ENCODE measurements at regions of chr14 and their contacts with region 1.

Region 1: DNA sequence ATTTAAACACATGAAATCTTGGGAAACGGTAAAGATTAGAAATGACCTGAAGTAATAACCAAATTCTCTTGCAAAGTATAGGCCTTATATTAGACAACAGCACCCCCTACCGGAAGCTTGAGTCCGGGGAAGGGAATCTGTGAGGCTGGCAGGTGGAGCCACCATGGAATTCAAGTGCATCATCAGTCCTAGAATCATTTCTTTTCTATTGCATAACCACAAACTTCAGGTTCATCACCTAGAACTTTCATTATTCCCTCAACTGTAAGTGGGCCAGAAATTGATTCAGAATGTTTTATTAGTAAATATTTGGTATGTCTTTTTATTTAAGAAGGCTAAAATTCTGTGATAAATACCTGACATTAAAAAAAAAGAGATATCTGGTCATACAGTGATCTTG is 48.5 kb downstream of the AP5M1 start:
- DNase-seq: peak; percentile 92
- H3K4me3 Mint-ChIP-seq: no peak overlapping the region
- H3K27ac Mint-ChIP-seq: no peak overlapping the region
- H3K4me1 Mint-ChIP-seq: peaks cover 5% of the 10 kb centered on the region
- H3K27me3 Mint-ChIP-seq: peaks cover 2% of the 10 kb centered on the region

Region 2: GRCh38 chr14:56491299-56492285 is 825.7 kb before region 1 on chr14:
- intact Hi-C with region 1: loop called (anchors 1 kb)
- DNase-seq: peak; percentile 75
- H3K4me3 Mint-ChIP-seq: no peak overlapping the region
- H3K27ac Mint-ChIP-seq: no peak overlapping the region
- H3K4me1 Mint-ChIP-seq: peaks cover 6% of the 10 kb centered on the region
- H3K27me3 Mint-ChIP-seq: peaks cover 4% of the 10 kb centered on the region

Region 3: DNA sequence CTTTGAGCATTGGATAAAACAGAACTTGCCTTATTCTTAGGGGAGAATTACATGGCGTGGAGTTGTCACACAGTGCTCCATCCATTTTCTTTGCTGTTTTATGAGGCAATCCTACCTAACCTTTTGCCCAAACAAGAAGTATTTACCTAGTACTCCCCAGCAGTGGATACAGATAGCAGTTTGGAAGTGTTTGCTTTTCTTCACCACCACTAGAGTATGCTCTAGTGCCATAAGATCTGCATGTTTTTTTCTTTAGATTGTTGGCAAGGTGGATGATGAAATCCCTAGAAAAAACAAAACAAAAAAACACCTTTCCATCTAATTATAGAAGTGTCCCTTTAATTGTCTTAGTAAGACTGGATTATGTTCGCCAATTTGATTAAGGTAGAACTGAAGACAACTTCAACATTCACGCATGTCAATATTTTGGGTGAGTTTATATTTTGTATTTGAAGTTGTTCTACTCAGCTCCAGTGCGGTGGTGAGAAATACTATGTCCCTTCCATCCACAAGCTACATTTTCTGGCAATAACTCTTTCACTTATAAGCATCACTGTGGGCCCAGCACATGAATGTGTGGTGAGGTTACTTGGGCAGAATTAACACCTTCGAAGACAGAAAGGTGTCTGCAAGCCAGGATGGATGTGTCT is 761.3 kb before region 1 on chr14:
- intact Hi-C with region 1: loop called (anchors 2 kb)
- DNase-seq: no peak
- H3K4me3 Mint-ChIP-seq: no peak overlapping the region
- H3K27ac Mint-ChIP-seq: no peak overlapping the region
- H3K4me1 Mint-ChIP-seq: no peaks in the 10 kb centered on the region
- H3K27me3 Mint-ChIP-seq: peaks cover 10% of the 10 kb centered on the region

Region 4: GRCh38 chr14:56659964-56660551 is 657.3 kb before region 1 on chr14:
- intact Hi-C with region 1: loop called (anchors 10 kb)
- DNase-seq: no peak
- H3K4me3 Mint-ChIP-seq: no peak overlapping the region
- H3K27ac Mint-ChIP-seq: no peak overlapping the region
- H3K4me1 Mint-ChIP-seq: no peaks in the 10 kb centered on the region
- H3K27me3 Mint-ChIP-seq: no peaks in the 10 kb centered on the region

Region 5: DNA sequence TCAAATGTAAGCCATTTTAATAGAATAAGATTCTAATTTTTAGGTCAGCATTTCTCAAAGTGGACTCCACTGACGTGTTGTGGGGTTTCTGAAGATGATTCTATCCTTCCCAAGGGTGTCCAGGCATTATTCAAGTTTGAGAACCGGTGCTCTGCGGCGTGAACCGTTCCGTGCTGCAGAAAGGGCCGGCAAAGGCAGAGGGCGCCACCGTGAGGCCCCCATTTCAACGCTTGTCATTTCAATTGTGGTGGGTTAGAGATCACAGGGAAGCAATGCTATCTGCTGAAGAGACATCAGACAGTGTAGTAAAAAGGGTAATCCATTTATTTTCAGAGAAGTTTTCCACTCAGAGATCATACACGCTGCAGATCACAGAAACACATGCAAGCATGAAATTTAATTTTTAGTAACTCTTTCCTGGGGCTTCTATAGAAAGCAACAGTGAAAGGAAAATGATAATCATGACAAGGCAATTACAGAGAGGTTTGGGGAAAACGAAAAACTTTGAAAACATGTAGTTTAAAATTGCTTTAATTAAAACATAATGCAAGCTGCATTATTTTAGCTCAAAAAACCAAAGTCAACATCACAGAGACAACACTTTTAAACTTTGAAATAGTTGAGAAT is 250.3 kb before region 1 on chr14:
- intact Hi-C with region 1: loop called (anchors 10 kb)
- DNase-seq: peak; percentile 74
- H3K4me3 Mint-ChIP-seq: no peak overlapping the region
- H3K27ac Mint-ChIP-seq: no peak overlapping the region
- H3K4me1 Mint-ChIP-seq: peaks cover 3% of the 10 kb centered on the region
- H3K27me3 Mint-ChIP-seq: peaks cover 47% of the 10 kb centered on the region

Region 6: DNA sequence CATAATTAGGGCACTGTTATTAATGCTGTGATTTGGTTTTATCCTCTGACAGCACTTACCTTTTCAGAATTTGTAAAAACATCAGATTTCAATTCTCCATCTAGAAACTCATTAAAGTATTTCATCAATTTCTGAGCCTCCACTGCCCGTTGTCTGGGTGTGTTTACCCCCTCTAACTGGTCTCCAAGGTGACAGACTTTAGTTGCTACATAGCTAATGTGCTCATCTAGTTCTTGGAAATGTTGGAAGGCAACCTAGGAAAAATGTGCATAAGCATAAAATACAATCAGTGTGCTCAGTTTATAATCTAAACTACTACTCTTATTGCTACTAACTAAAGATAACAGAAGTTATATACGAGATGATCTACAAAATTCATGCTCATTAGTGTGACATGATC is 73.2 kb before region 1 on chr14:
- intact Hi-C with region 1: no loop called
- DNase-seq: no peak
- H3K4me3 Mint-ChIP-seq: no peak overlapping the region
- H3K27ac Mint-ChIP-seq: no peak overlapping the region
- H3K4me1 Mint-ChIP-seq: no peaks in the 10 kb centered on the region
- H3K27me3 Mint-ChIP-seq: no peaks in the 10 kb centered on the region

Region 7: DNA sequence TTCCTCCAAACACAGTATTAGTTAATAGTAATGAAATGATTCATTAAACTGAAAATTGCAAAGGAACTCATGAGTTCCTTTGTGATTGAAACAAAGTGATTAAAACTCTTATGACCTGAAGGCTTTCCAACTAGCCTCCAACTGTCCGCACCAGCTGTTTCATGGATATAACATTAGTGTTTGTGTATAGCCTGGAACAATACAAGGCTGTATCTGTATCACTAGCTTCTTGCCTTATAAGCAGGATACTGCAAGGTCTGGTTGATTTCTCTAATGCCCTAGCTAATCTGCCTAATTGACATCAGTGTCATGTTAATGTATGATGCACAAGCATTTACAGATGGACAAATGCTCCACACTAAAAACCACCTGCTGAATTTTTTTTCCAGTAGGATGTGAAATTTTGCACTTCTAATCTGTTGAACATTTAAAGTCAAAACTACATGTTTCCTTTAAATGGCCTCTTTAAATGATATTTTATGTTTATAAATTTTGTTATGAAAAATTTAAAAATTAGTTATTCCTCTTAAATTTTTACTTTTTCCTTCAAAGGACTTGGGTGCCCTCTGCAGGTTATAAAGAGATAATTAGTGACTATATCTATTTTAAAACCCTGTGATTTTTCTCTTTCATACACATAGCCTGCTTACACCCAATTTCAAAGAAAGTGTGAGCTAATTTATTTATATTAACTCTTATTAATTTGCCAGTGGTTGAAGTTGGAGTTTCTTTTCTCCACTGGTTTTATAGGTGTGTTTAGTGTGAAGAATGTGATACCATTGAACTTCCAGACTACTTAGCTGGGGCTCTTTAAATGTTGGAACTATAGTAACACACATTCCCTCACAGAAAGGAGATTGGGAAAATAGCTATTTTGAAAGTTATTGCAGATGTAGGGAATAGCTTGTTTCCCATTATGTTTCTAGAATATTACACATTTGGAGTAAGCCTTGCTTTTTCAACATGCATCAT is 23.2 kb before region 1 on chr14:
- intact Hi-C with region 1: no loop called
- DNase-seq: no peak
- H3K4me3 Mint-ChIP-seq: no peak overlapping the region
- H3K27ac Mint-ChIP-seq: no peak overlapping the region
- H3K4me1 Mint-ChIP-seq: no peaks in the 10 kb centered on the region
- H3K27me3 Mint-ChIP-seq: no peaks in the 10 kb centered on the region

Region 8: DNA sequence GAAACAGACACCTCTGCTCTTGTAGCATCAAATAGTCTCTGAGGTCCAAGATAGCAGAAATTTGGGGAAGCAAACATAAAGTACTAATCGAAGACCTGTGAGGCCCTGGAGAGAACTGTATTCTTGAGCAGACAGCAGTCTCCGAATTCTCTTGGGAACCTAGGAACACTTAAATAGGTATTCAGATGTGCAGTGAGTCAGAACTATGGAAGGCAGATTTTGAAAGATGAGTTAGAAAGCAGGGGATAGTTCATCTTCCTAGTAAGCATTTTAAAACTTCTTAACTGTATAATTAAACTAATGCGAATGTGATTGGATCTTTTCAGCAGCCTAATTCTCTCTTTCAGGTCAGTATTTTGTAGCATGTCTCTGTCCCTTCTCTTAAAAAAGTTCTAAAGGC is 103.7 kb after region 1 on chr14:
- intact Hi-C with region 1: no loop called
- DNase-seq: no peak
- H3K4me3 Mint-ChIP-seq: no peak overlapping the region
- H3K27ac Mint-ChIP-seq: no peak overlapping the region
- H3K4me1 Mint-ChIP-seq: no peaks in the 10 kb centered on the region
- H3K27me3 Mint-ChIP-seq: peaks cover 1% of the 10 kb centered on the region

Measured in activated CD4-positive, alpha-beta T cell treated with anti-CD3 and anti-CD28 coated beads, Interleukin-2, amount 10 ng/mL, durations not matched to agents 24 days and 14 days (primary cell).